A549 (cell line): ENCODE measurements at regions of chr1 and their contacts with region 1.

Region 1: DNA sequence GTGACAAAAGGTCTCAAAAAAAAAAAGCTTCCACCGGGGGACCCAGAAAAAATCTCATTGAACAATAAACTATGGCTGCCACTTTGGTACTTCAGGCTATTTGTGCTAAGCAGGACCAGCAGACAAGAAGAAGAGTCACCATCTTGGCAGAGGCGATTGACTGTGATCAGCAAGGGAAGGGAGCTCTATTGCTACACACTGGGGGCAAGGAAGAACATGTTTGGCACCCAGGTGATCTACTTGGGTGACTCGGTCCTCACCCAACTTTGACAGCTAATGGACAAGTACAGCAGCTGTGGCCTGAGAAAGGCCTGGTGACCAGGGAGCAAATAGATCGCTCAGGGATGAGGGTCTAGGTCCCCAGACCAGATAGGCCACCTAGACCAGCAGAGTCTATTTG is 53.4 kb upstream of the SRP9 start:
- DNase-seq: no peak
- ATAC-seq: no peak
- H3K4me3 ChIP-seq: no peak overlapping the region
- H3K27ac ChIP-seq: no peak overlapping the region
- H3K4me1 ChIP-seq: no peaks in the 10 kb centered on the region
- CTCF ChIP-seq: no peak
- EP300 ChIP-seq: no peak
- POLR2A ChIP-seq: no peak
- RAD21 ChIP-seq: no peak

Region 2: GRCh38 chr1:225710804-225711203 is 13.4 kb before region 1 on chr1:
- CTCF ChIA-PET with region 1: interaction called, 13 read pairs
- POLR2A ChIA-PET with region 1: no interaction called
- DNase-seq: peak; percentile 81 to 89
- ATAC-seq: peak; percentile 87 to 89
- H3K4me3 ChIP-seq: no peak overlapping the region
- H3K27ac ChIP-seq: peak overlapping the region; percentile 70 to 87
- H3K4me1 ChIP-seq: peaks cover 25% of the 10 kb centered on the region
- CTCF ChIP-seq: no peak
- EP300 ChIP-seq: peak; percentile 37 to 51; a peak in 2 of 5 replicates
- POLR2A ChIP-seq: no peak
- RAD21 ChIP-seq: peak; percentile 22; a peak in 1 of 5 replicates

Region 3: DNA sequence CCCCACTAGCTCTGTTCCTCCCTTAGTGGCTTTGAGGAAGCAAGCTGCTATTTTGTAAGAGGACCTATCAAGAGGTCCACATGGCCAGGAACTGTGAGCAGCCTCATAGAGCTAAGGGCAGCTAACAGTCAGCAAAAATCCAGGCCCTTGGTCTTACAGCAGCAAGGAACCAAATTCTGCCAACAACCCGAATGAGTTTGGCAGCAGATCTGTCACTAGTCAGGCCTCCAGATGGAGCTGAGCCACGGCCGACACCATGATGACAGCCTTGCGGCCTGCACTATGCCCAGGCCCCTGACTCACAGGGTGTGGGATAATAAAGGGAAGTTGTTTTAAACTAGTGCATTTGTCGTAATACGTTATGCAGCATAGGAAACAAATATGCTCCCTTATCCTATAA is 310.2 kb after region 1 on chr1:
- CTCF ChIA-PET with region 1: no interaction called
- POLR2A ChIA-PET with region 1: no interaction called
- DNase-seq: no peak
- ATAC-seq: no peak
- H3K4me3 ChIP-seq: no peak overlapping the region
- H3K27ac ChIP-seq: no peak overlapping the region
- H3K4me1 ChIP-seq: no peaks in the 10 kb centered on the region
- CTCF ChIP-seq: no peak
- EP300 ChIP-seq: no peak
- POLR2A ChIP-seq: no peak
- RAD21 ChIP-seq: no peak